Astrocyte of the cerebellum (primary cell): ENCODE measurements at regions of chr2 and their contacts with region 1.

Region 1: GRCh38 chr2:231170055-231170454 is 28.4 kb upstream of the ARMC9 start:
- DNase-seq: no peak
- H3K4me3 ChIP-seq: no peak overlapping the region
- CTCF ChIP-seq: no peak

Region 2: DNA sequence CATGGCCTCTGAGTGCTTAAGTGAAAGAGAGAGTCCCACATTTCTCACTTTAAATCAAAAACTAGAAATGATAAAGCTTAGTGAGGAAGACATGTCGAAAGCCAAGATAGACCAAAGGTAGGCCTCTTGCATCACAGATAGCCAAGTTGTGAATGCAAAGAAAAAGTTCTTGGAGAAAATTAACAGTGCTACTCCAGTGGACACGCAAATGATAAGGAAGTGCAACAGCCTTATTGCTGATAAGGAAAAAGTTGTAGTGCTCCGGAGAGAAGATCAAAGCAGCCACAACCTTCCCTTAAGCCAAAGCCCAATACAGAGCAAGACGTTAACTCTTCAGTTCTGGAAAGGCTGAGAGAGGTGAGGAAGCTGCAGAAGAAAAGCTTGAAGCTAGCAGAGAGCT is 81.3 kb before region 1 on chr2:
- in situ Hi-C with region 1: loop called (anchors 5 kb)
- DNase-seq: no peak
- H3K4me3 ChIP-seq: no peak overlapping the region
- CTCF ChIP-seq: no peak

Region 3: GRCh38 chr2:231124838-231125568 is 45.1 kb before region 1 on chr2 and contains the start of gene HTR2B:
- in situ Hi-C with region 1: loop called (anchors 10 kb)
- DNase-seq: no peak
- H3K4me3 ChIP-seq: no peak within 1 kb of the TSS
- CTCF ChIP-seq: no peak

Region 4: GRCh38 chr2:231260442-231261208 is 90.6 kb after region 1 on chr2:
- in situ Hi-C with region 1: no loop called
- DNase-seq: no peak
- H3K4me3 ChIP-seq: no peak overlapping the region
- CTCF ChIP-seq: no peak